AG04449 (cell line): ENCODE measurements at regions of chr1 and their contacts with region 1.

Region 1: GRCh38 chr1:171984850-171985485 is 143.7 kb downstream of the DNM3 start:
- DNase-seq: no peak
- H3K4me3 ChIP-seq: no peak overlapping the region
- CTCF ChIP-seq: peak; percentile 61

Region 2: DNA sequence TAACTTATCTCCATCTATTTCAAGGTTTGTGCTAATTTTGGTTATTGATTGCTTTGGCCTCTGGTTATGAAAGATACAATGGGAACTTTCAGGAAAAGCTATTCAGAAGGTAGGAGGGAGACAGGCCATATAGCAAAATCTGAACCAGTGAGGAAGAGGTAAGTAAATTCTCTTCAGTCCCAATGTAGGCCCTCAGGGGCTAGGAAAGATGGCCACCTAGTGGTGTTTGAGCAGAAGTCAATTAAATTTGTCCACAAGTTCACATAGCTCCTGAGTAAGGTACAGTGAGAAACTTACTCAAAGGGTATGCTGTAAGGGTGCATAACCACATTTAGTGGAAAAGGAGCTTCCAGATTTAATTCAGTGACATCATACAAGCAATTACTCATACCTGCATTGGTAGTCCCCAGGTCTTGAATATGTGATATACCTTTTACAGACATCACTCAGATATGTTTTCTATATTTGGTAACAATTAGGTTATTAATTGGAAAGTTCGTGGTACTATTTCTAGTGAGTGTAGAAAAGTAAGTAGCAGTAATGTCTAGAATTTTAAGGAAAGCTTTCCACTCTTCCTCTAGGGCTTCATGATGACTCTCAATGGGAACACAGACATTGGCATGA is 758.1 kb before region 1 on chr1:
- CTCF ChIA-PET with region 1: no interaction called
- POLR2A ChIA-PET with region 1: no interaction called
- DNase-seq: peak; percentile 21
- H3K4me3 ChIP-seq: no peak overlapping the region
- CTCF ChIP-seq: peak; percentile 70

Region 3: GRCh38 chr1:171644805-171645483 is 340.0 kb before region 1 on chr1:
- CTCF ChIA-PET with region 1: interaction called, 190 read pairs
- POLR2A ChIA-PET with region 1: no interaction called
- DNase-seq: peak; percentile 29
- H3K4me3 ChIP-seq: no peak overlapping the region
- CTCF ChIP-seq: peak; percentile 85

Region 4: DNA sequence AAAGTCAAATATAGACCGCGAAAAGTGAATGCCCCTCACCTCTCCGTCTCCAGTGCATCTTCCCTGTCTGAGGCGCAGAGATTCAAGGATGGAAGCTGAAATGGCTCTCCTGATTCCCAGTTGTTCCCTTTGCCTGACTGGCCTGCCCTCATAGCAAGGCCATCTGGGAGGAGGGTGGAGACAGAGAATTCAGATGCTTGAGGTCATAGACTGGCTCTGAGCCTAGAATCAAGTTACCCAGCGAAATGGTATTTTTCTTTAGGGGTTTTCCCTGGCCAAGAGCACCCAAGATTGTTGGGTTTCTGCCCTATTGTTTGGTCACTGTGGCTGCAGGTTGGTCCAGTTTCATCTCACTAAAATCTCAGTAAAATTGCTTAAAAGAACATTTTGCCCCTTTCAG is 196.3 kb before region 1 on chr1:
- CTCF ChIA-PET with region 1: interaction called, 44 read pairs
- POLR2A ChIA-PET with region 1: no interaction called
- DNase-seq: peak; percentile 59
- H3K4me3 ChIP-seq: no peak overlapping the region
- CTCF ChIP-seq: no peak

Region 5: DNA sequence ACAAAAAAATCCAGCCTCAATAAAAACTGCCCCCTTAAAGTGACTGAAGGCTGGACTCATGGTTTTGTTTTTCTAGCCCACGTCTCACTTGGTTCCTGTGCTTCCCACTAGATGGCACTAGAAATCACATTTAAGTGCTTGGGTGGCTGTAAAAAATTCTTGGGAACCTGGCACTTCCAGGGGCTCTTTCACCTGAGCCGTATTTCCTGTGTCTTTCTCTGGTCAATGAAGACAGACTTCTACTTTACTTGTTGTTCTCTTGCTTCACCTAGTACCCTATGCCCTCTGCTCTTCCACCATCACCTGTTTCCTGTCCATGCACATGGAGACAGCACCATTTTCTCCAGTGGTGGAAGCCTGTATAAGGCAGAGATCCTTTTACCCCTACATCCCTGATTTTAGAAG is 183.5 kb before region 1 on chr1:
- CTCF ChIA-PET with region 1: interaction called, 835 read pairs
- POLR2A ChIA-PET with region 1: no interaction called
- DNase-seq: no peak
- H3K4me3 ChIP-seq: no peak overlapping the region
- CTCF ChIP-seq: peak; percentile 72

Region 6: DNA sequence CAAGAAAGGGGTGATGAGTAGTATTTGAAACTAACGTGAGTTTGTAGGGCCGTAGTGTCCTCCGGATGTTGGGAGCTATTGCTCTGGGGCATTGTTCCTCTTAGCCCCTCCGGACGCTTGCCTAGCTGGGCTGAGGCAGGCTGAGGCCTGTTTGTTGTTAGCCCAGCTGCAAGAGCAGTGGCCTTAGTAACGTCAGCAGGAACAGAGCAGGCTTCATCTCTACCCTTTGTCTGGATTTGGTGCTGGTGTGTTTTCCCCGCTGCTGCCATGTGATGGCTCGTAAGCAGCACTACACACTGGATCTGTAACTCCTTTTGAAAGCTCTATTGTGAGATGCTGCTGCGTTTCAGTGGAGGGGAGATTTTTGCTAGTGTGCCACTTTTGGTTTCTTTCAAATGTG is 86.0 kb before region 1 on chr1:
- CTCF ChIA-PET with region 1: no interaction called
- POLR2A ChIA-PET with region 1: no interaction called
- DNase-seq: no peak
- H3K4me3 ChIP-seq: no peak overlapping the region
- CTCF ChIP-seq: no peak

Region 7: GRCh38 chr1:171965777-171966176 is 19.2 kb before region 1 on chr1:
- CTCF ChIA-PET with region 1: interaction called, 57 read pairs
- POLR2A ChIA-PET with region 1: no interaction called
- DNase-seq: no peak
- H3K4me3 ChIP-seq: no peak overlapping the region
- CTCF ChIP-seq: no peak

Region 8: GRCh38 chr1:172144445-172145061 is 159.6 kb after region 1 on chr1:
- CTCF ChIA-PET with region 1: no interaction called
- POLR2A ChIA-PET with region 1: no interaction called
- DNase-seq: peak; percentile 97
- H3K4me3 ChIP-seq: peak overlapping the region; percentile 80
- CTCF ChIP-seq: no peak